ENCODE measurements at regions of chr20 and their contacts with region 1.

Region 1: GRCh38 chr20:36605399-36606157 is at the start of gene RAB5IF:
- DNase-seq: peak; percentile 91 to 100
- H3K4me3 ChIP-seq: peak within 1 kb of the TSS; percentile 100
- H3K27ac ChIP-seq: peak within 1 kb of the TSS; percentile 95
- H3K4me1 ChIP-seq: peaks cover 22% of the 10 kb centered on the region
- H3K27me3 ChIP-seq: no peaks in the 10 kb centered on the region
- CTCF ChIP-seq: peak; percentile 80
- total RNA-seq, gene RAB5IF: 220 and 303 TPM in 2 replicates

Region 2: DNA sequence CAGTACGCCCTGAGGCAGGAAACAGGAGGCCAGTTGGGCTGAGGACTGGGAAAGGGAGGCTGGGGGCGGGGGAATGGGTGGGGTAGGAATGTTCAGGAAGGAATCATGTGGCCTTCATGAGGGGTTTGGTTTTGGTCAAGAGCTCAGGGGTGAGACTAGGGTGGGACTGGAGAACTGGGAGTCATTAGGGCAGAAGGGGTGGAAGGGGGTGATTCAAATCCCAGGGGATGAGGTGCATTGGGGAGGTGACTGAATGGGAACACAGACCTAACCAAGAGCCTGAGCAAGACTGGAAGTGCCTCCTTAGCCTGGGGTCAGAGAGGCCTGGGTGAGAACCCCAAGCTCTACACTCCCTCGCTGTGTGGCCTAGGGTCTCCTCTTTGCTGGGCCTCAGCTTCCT is 212.6 kb before region 1 on chr20:
- CTCF ChIA-PET with region 1: interaction called, 10 read pairs
- POLR2A ChIA-PET with region 1: no interaction called
- intact Hi-C with region 1: no loop called
- DNase-seq: no peak
- H3K4me3 ChIP-seq: no peak overlapping the region
- H3K27ac ChIP-seq: no peak overlapping the region
- H3K4me1 ChIP-seq: no peaks in the 10 kb centered on the region
- H3K27me3 ChIP-seq: peaks cover 15% of the 10 kb centered on the region
- CTCF ChIP-seq: no peak

Region 3: GRCh38 chr20:36460648-36461599 is 144.7 kb before region 1 on chr20:
- CTCF ChIA-PET with region 1: no interaction called
- POLR2A ChIA-PET with region 1: no interaction called
- intact Hi-C with region 1: loop called (anchors 5 kb)
- DNase-seq: peak; percentile 76 to 86
- H3K4me3 ChIP-seq: peak overlapping the region; percentile 43
- H3K27ac ChIP-seq: peak overlapping the region; percentile 27; the same call in 1 of the 2 replicates
- H3K4me1 ChIP-seq: peaks cover 39% of the 10 kb centered on the region
- H3K27me3 ChIP-seq: no peaks in the 10 kb centered on the region
- CTCF ChIP-seq: no peak

Region 4: DNA sequence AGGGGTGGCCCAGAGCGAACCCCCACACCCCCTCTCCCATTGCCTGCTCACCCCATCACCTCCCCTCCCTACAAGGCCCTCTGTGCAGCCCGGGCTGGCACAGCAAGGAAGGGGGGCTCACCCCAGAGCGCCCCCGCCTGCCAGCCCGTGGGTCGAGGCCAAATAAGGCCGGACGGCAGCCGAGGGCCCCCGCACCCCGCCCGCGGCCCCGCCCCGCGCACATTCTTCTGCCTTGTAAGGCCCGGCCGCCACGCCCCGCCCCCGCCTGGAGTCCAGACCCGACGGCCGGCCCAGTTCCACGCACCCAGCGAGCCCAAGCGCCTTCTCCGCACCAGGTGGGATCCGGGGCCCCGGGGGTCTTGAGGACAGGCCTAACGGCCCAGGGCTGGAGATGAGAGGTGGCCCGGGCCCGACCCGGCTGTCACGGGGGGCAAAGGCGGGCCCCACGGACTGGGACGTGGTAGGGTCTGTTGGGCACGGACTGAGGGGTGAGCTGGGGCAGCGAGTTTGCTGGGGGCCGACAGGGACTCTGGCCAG is 64.3 kb before region 1 on chr20 and contains the start of gene MYL9:
- CTCF ChIA-PET with region 1: no interaction called
- POLR2A ChIA-PET with region 1: interaction called, 11 read pairs
- intact Hi-C with region 1: no loop called
- DNase-seq: peak in 1 of 2 experiments; percentile 68
- H3K4me3 ChIP-seq: no peak within 1 kb of the TSS
- H3K27ac ChIP-seq: no peak within 1 kb of the TSS
- H3K4me1 ChIP-seq: no peaks in the 10 kb centered on the region
- H3K27me3 ChIP-seq: no peaks in the 10 kb centered on the region
- CTCF ChIP-seq: no peak
- total RNA-seq, gene MYL9: 13.3 and 25.3 TPM in 2 replicates

Region 5: GRCh38 chr20:36550797-36551299 is 54.7 kb before region 1 on chr20:
- CTCF ChIA-PET with region 1: interaction called, 3 read pairs
- POLR2A ChIA-PET with region 1: no interaction called
- intact Hi-C with region 1: loop called (anchors 1 kb)
- DNase-seq: no peak
- H3K4me3 ChIP-seq: no peak overlapping the region
- H3K27ac ChIP-seq: no peak overlapping the region
- H3K4me1 ChIP-seq: no peaks in the 10 kb centered on the region
- H3K27me3 ChIP-seq: no peaks in the 10 kb centered on the region
- CTCF ChIP-seq: no peak

Region 6: DNA sequence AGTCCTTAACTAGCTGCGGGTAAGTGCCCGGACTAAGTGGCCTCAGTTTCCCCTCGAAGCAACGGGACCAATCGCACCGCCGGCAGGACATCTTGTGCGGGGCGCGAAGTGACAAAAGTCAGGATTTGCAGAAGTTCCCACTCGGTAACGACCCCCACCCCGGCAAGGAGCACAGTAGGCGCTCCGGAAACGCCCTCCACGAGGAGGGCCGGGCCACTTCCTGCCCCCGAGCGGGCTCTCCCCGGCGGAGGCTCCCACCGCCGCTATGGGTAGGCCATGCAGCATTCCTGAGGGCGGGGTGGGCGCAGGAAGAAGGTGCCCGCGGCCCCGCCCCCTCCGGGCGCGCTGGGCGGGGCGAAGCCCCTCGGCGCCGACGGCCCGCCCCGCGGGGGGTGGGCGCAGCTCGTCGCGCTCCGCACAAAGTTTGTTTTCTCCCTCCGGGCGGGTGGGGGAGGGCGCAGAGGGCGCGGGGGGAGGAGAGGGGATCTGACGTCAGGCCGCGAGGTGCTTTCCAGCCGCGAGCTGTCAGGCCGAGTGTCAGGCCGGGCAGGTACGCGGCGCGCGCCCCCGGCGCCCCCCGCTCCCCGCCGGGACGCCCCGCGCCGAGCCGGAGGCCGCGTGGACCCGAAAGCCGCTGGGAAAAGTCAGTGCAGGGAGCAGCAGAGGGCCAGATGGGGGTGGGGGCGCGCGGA is 32.3 kb before region 1 on chr20 and contains the start of gene TGIF2:
- CTCF ChIA-PET with region 1: interaction called, 4 read pairs
- POLR2A ChIA-PET with region 1: no interaction called
- intact Hi-C with region 1: loop called (anchors 2 kb)
- DNase-seq: peak; percentile 52 to 91
- H3K4me3 ChIP-seq: peak within 1 kb of the TSS; percentile 75
- H3K27ac ChIP-seq: no peak within 1 kb of the TSS
- H3K4me1 ChIP-seq: peaks cover 18% of the 10 kb centered on the region
- H3K27me3 ChIP-seq: no peaks in the 10 kb centered on the region
- CTCF ChIP-seq: no peak
- total RNA-seq, gene TGIF2: 15.7 and 18.3 TPM in 2 replicates

Region 7: DNA sequence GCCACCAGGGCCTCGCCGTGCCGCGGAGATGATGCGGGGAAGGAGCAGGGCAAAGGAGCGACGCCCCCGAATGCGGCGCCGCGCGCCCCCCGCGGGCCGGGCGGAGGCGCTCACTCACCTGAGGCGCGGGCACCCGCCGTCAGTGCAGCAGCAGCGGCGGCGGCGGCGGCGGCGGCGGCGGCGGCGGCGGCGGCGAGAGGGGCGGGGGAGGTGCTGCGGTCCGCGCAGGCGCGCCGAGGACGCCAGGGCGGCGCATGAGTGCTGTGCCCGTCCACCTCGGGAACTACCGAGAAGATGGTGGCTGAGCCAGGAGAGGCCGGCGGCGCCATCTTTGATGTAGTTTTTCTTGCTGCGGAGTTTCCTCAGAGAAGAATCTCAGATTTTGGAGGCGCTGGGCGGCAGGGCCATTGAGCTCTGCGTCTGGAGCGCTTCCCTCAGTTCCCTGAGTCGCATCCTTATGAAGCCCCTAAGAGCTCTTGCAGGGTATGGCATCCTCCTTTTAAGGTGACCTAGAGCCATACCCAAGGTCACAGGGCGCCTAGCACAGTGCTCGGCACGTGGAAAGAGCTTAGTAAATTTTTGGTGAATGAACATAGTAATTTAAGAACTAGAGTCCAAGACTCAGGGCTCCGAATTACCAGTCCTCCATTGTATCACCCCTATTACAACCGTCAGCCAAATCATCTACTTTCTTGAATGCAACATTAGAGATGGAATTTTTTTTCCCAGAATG is 140.5 kb after region 1 on chr20 and contains the start of gene NDRG3:
- CTCF ChIA-PET with region 1: no interaction called
- POLR2A ChIA-PET with region 1: no interaction called
- intact Hi-C with region 1: loop called (anchors 5 kb)
- DNase-seq: peak; percentile 85 to 92
- H3K4me3 ChIP-seq: peak within 1 kb of the TSS; percentile 97
- H3K27ac ChIP-seq: peak within 1 kb of the TSS; percentile 46
- H3K4me1 ChIP-seq: peaks cover 18% of the 10 kb centered on the region
- H3K27me3 ChIP-seq: no peaks in the 10 kb centered on the region
- CTCF ChIP-seq: no peak
- total RNA-seq, gene NDRG3: 40.7 and 55.6 TPM in 2 replicates

Measured in PC-9 (cell line).